ENCODE measurements at regions of chr1 and their contacts with region 1.

Region 1: GRCh38 chr1:161225534-161226319 is at the start of gene TOMM40L:
- DNase-seq: peak; percentile 65
- ATAC-seq: peak; percentile 95
- H3K4me3 Mint-ChIP-seq: peak within 1 kb of the TSS; percentile 99
- H3K27ac Mint-ChIP-seq: peak within 1 kb of the TSS; percentile 93
- H3K4me1 Mint-ChIP-seq: peaks cover 29% of the 10 kb centered on the region
- H3K27me3 Mint-ChIP-seq: peaks cover 25% of the 10 kb centered on the region
- CTCF ChIP-seq: no peak
- total RNA-seq, gene TOMM40L: 11.7 and 12.4 TPM in 2 replicates

Region 2: DNA sequence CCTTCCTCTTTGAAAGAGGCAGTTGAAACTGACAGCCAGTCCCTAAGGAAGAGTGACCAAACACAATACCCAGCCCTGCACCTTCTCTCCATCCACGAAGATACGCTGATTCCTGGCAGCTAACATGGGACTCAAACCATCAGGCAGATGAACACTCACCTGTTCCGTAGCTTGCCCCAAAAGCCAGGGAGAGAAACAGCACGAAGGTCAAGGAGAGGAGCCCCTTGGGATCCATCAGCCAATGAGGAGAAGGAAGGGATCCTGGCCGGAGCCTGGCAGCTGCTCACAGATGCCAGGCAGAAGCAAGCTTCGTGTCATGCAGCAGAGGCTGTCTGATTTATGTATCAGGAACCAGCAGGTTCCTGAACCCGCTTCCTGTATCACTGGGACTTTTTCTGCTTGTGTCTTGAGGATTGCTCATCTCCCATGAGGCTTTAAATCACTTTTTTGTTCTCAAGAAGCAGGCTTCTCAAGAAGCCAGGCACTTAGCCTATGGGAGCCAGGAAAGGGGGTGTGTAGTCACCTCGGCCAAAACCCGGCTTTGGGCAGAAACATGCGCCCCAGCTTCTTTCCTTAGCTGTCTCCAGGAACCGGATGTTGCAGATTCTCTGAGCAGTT is 578.9 kb before region 1 on chr1 and contains the start of gene SLAMF1:
- CTCF ChIA-PET with region 1: no interaction called
- POLR2A ChIA-PET with region 1: no interaction called
- intact Hi-C with region 1: no loop called
- DNase-seq: peak; percentile 35
- ATAC-seq: peak; percentile 84
- H3K4me3 Mint-ChIP-seq: peak within 1 kb of the TSS; percentile 95
- H3K27ac Mint-ChIP-seq: peak within 1 kb of the TSS; percentile 91
- H3K4me1 Mint-ChIP-seq: peaks cover 88% of the 10 kb centered on the region
- H3K27me3 Mint-ChIP-seq: no peaks in the 10 kb centered on the region
- CTCF ChIP-seq: no peak
- total RNA-seq, gene SLAMF1: 85.7 and 91.7 TPM in 2 replicates

Region 3: DNA sequence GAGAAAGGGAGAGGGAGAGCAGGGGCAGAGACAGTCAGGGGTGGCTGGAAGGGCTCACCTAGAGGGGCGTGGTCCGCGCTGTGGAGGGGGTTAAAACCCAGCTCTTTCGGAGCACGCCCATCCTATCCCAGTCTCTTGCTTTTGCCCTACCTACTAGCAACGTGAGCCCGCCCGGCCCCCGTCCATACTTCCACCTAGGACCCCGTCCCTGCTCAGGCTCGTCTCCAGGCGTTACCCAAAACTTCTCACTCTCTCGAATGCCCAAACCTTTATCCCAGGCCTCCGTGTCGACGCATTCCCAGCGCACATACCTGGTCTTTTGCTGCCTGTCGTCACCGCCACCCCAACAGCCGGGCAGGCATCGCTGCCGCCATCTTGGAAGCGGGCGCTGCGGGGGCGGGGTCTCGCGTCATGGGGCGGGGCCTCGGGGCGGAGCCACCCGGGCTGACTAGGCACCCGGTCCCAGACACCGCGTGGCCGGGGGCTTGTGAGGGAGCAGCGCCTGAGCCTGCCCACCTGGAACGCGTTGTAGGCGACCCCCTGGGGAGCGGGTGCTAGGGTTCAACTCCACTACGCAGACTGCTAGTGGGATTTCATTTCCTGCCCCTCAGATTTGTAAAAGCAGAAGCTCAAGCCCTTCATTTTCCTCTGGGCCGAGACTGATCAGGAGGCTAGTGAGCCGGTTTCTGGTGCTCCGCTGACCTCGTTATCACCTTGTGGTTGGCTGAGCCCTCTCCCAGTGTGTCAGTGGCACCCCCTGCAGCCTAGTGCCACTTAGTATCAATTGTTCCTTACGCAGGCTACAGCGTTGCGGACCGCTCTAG is 48.4 kb before region 1 on chr1 and contains the start of gene B4GALT3:
- CTCF ChIA-PET with region 1: interaction called, 14 read pairs
- POLR2A ChIA-PET with region 1: interaction called, 18 read pairs
- intact Hi-C with region 1: loop called (anchors 1 kb)
- DNase-seq: peak; percentile 99
- ATAC-seq: peak; percentile 90
- H3K4me3 Mint-ChIP-seq: peak within 1 kb of the TSS; percentile 99
- H3K27ac Mint-ChIP-seq: peak within 1 kb of the TSS; percentile 99
- H3K4me1 Mint-ChIP-seq: peaks cover 64% of the 10 kb centered on the region
- H3K27me3 Mint-ChIP-seq: no peaks in the 10 kb centered on the region
- CTCF ChIP-seq: no peak
- total RNA-seq, gene B4GALT3: 40.7 and 41.7 TPM in 2 replicates

Region 4: DNA sequence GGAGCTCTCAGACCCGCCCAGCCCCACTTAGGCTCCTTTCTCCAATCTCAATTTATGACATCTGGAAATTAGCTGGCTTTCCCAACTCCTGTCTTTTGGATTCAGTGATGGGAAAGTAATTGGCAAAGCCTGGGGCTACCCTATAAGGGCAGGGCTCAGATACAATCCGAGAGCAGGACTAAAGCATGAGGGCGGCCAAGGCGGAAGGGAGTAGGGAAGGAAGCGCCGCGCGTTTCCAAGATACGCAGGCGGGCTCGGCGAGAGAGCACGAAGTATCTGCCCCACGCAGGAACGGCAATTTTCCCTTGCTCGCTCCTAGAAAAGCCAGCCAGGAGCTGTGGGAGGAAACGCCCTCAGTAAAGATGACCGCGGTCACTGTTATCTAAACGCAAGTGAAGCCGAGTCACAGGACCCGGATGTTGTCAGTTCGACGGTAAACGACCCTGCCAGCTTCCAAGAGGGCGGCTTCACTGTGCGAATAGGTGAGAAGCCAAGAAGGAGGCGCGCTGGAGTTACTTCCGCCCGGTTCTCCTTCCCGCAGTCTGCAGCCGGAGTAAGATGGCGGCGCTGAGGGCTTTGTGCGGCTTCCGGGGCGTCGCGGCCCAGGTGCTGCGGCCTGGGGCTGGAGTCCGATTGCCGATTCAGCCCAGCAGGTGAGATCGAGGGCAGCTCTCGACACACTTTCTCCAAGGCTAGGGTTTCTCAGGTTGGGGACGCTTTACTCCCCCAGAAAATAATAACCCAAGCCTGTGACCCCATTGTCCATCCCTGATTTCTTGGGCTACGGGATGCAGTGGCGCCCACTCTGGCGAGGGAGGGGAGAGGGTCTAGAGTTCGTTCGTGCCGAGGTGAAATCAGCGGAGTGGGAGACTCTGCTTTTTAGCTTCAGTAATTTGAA is 23.6 kb before region 1 on chr1 and contains the start of gene NDUFS2:
- CTCF ChIA-PET with region 1: interaction called, 8 read pairs
- POLR2A ChIA-PET with region 1: interaction called, 43 read pairs
- intact Hi-C with region 1: loop called (anchors 2 kb)
- DNase-seq: peak; percentile 82
- ATAC-seq: peak; percentile 99
- H3K4me3 Mint-ChIP-seq: peak within 1 kb of the TSS; percentile 94
- H3K27ac Mint-ChIP-seq: peak within 1 kb of the TSS; percentile 94
- H3K4me1 Mint-ChIP-seq: peaks cover 38% of the 10 kb centered on the region
- H3K27me3 Mint-ChIP-seq: no peaks in the 10 kb centered on the region
- CTCF ChIP-seq: no peak
- total RNA-seq, gene NDUFS2: 69.1 and 73.9 TPM in 2 replicates

Region 5: GRCh38 chr1:161305867-161306519 is 80.3 kb after region 1 on chr1:
- CTCF ChIA-PET with region 1: interaction called, 5 read pairs
- POLR2A ChIA-PET with region 1: interaction called, 26 read pairs
- intact Hi-C with region 1: loop called (anchors 1 kb)
- DNase-seq: peak; percentile 78
- ATAC-seq: peak; percentile 94
- H3K4me3 Mint-ChIP-seq: peak overlapping the region; percentile 99
- H3K27ac Mint-ChIP-seq: peak overlapping the region; percentile 93
- H3K4me1 Mint-ChIP-seq: peaks cover 44% of the 10 kb centered on the region
- H3K27me3 Mint-ChIP-seq: no peaks in the 10 kb centered on the region
- CTCF ChIP-seq: no peak

Region 6: GRCh38 chr1:161382214-161383019 is 156.7 kb after region 1 on chr1:
- CTCF ChIA-PET with region 1: interaction called, 26 read pairs
- POLR2A ChIA-PET with region 1: interaction called, 8 read pairs
- intact Hi-C with region 1: loop called (anchors 1 kb)
- DNase-seq: no peak
- ATAC-seq: peak; percentile 90
- H3K4me3 Mint-ChIP-seq: no peak overlapping the region
- H3K27ac Mint-ChIP-seq: no peak overlapping the region
- H3K4me1 Mint-ChIP-seq: peaks cover 7% of the 10 kb centered on the region
- H3K27me3 Mint-ChIP-seq: no peaks in the 10 kb centered on the region
- CTCF ChIP-seq: no peak